GM12878 (cell line): ENCODE measurements at regions of chr2 and their contacts with region 1.

Region 1: GRCh38 chr2:62456721-62457539 is 49.1 kb downstream of the TMEM17 start:
- DNase-seq: no peak
- ATAC-seq: peak; percentile 97
- H3K4me3 ChIP-seq: peak overlapping the region; percentile 64; the same call in 1 of the 2 replicates
- H3K27ac ChIP-seq: no peak overlapping the region
- H3K4me1 ChIP-seq: no peaks in the 10 kb centered on the region
- H3K27me3 ChIP-seq: no peaks in the 10 kb centered on the region
- CTCF ChIP-seq: peak; percentile 87 to 96 (median 88)
- EP300 ChIP-seq: no peak
- POLR2A ChIP-seq: no peak
- RAD21 ChIP-seq: peak; percentile 93

Region 2: GRCh38 chr2:62032096-62032495 is 424.8 kb before region 1 on chr2:
- CTCF ChIA-PET with region 1: no interaction called
- POLR2A ChIA-PET with region 1: no interaction called
- RAD21 ChIA-PET with region 1: no interaction called
- SMC1A ChIA-PET with region 1: no interaction called
- in situ Hi-C with region 1: no loop called
- intact Hi-C with region 1: no loop called
- DNase-seq: no peak
- ATAC-seq: peak; percentile 62
- H3K4me3 ChIP-seq: no peak overlapping the region
- H3K27ac ChIP-seq: no peak overlapping the region
- H3K4me1 ChIP-seq: peaks cover 14% of the 10 kb centered on the region
- H3K27me3 ChIP-seq: no peaks in the 10 kb centered on the region
- CTCF ChIP-seq: no peak
- EP300 ChIP-seq: no peak
- POLR2A ChIP-seq: no peak
- RAD21 ChIP-seq: no peak

Region 3: GRCh38 chr2:62443886-62444285 is 13.0 kb before region 1 on chr2:
- CTCF ChIA-PET with region 1: interaction called, 15 read pairs
- POLR2A ChIA-PET with region 1: no interaction called
- RAD21 ChIA-PET with region 1: interaction called, 3 read pairs
- SMC1A ChIA-PET with region 1: interaction called, 8 read pairs
- in situ Hi-C with region 1: no loop called
- intact Hi-C with region 1: no loop called
- DNase-seq: no peak
- ATAC-seq: peak; percentile 59; the same call in 2 of the 3 replicates
- H3K4me3 ChIP-seq: no peak overlapping the region
- H3K27ac ChIP-seq: no peak overlapping the region
- H3K4me1 ChIP-seq: peaks cover 13% of the 10 kb centered on the region
- H3K27me3 ChIP-seq: no peaks in the 10 kb centered on the region
- CTCF ChIP-seq: 0 out of 6 replicates have a peak, but pooled peaks of 1 of the 3 experiments have one; percentile 10
- EP300 ChIP-seq: no peak
- POLR2A ChIP-seq: no peak
- RAD21 ChIP-seq: peak; percentile 33; the same call in 1 of the 2 replicates

Region 4: GRCh38 chr2:62475172-62476011 is 18.5 kb after region 1 on chr2:
- CTCF ChIA-PET with region 1: interaction called, 25 read pairs
- POLR2A ChIA-PET with region 1: no interaction called
- RAD21 ChIA-PET with region 1: interaction called, 4 read pairs
- SMC1A ChIA-PET with region 1: interaction called, 8 read pairs
- in situ Hi-C with region 1: no loop called
- intact Hi-C with region 1: no loop called
- DNase-seq: no peak
- ATAC-seq: no peak
- H3K4me3 ChIP-seq: no peak overlapping the region
- H3K27ac ChIP-seq: no peak overlapping the region
- H3K4me1 ChIP-seq: no peaks in the 10 kb centered on the region
- H3K27me3 ChIP-seq: no peaks in the 10 kb centered on the region; a peak in 1 of 4 replicates
- CTCF ChIP-seq: no peak
- EP300 ChIP-seq: no peak
- POLR2A ChIP-seq: no peak
- RAD21 ChIP-seq: no peak

Region 5: DNA sequence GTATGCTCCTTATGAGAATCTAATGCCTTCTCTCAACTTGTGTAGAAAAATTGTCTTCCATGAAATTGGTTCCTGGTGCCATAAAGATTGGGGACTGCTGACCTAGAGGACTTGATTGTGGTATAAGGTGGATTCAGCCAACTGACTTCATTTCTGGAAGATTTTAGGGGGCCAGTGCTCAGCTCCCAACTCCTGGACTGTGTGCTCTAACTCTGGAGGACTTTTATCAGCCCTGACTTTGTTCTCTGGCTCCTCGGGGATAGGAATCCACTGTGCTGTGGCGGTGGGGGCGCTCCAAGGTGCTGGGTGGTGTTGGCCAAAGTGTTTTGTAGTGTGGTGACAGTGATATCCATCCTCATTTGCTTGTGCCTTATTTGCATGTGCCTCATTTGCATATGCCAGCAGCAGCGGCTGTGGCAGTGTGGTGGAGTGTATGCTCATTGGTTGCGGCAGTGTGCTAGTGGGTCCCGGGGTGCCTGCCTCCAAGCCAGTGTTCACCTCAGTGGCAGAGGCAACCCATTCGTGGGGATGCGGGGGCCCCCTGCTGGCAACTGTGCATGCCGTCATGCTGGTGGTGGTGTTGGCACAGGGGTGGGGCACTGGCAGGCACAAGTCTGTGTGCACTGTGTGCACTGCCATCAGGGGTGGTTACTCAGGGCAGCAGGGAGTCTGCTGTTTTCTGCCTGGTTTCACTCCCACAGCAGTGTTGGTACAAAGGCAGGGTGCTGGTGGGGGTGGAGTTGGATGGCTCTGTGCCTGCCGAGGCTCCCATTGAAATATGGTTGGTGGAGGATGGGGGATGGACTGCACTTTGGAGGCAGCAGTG is 268.2 kb after region 1 on chr2:
- CTCF ChIA-PET with region 1: interaction called, 12 read pairs
- POLR2A ChIA-PET with region 1: interaction called, 4 read pairs
- RAD21 ChIA-PET with region 1: no interaction called
- SMC1A ChIA-PET with region 1: interaction called, 5 read pairs
- in situ Hi-C with region 1: no loop called
- intact Hi-C with region 1: no loop called
- DNase-seq: no peak
- ATAC-seq: peak; percentile 63
- H3K4me3 ChIP-seq: no peak overlapping the region
- H3K27ac ChIP-seq: no peak overlapping the region
- H3K4me1 ChIP-seq: peaks cover 4% of the 10 kb centered on the region; the same call in 1 of the 2 replicates
- H3K27me3 ChIP-seq: no peaks in the 10 kb centered on the region
- CTCF ChIP-seq: peak in 2 of 3 experiments; percentile 7 to 18; a peak in 1 of 6 replicates
- EP300 ChIP-seq: no peak
- POLR2A ChIP-seq: no peak
- RAD21 ChIP-seq: peak; percentile 31; the same call in 1 of the 2 replicates

Region 6: DNA sequence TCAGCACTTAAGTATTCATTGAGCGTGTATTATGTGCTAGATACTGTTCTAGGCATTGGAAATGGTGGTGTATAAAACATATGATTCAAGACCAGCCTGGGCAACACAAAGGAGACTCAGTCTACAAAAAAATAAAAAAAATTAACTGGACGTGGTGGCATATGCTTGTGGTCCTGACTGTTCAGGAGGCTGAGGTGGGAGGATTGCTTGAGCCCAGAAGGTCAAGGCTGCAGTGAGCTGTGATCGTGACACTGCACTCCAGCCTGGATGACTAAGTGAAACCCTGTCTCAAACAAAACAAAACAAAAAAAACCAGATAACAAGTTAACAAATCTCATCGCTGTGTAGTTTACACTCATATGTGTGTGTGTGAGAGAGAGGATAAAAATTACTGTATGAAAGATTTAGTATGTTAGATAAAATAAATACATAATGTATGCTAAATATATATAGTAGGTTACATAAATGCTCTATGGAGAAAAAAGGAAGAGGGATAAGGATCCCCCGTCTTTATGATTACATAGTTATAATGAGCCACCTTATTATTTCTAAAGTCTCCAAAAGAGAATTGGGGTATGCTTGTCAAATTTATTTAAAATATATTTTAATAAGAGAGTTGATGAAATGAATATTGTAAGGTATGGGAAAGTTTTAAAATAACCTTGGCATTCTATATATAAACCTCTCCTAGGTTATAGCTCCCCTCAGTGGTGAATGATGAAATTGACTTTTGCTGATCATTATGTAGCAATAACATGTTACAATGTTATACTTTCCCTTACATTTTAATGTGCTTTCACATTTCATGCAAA is 317.8 kb after region 1 on chr2:
- CTCF ChIA-PET with region 1: interaction called, 249 read pairs
- POLR2A ChIA-PET with region 1: interaction called, 6 read pairs
- RAD21 ChIA-PET with region 1: interaction called, 183 read pairs
- SMC1A ChIA-PET with region 1: interaction called, 201 read pairs
- in situ Hi-C with region 1: loop called (anchors 5 kb)
- intact Hi-C with region 1: loop called (anchors 1 kb)
- DNase-seq: peak; percentile 17
- ATAC-seq: peak; percentile 78
- H3K4me3 ChIP-seq: no peak overlapping the region
- H3K27ac ChIP-seq: no peak overlapping the region
- H3K4me1 ChIP-seq: no peaks in the 10 kb centered on the region
- H3K27me3 ChIP-seq: no peaks in the 10 kb centered on the region
- CTCF ChIP-seq: peak; percentile 49 to 71 (median 56); a peak in 5 of 6 replicates
- EP300 ChIP-seq: no peak
- POLR2A ChIP-seq: no peak
- RAD21 ChIP-seq: peak; percentile 94

Region 7: GRCh38 chr2:63023444-63023843 is 566.5 kb after region 1 on chr2:
- CTCF ChIA-PET with region 1: interaction called, 18 read pairs
- POLR2A ChIA-PET with region 1: no interaction called
- RAD21 ChIA-PET with region 1: no interaction called
- SMC1A ChIA-PET with region 1: interaction called, 6 read pairs
- in situ Hi-C with region 1: no loop called
- intact Hi-C with region 1: no loop called
- DNase-seq: peak; percentile 12
- ATAC-seq: peak; percentile 88
- H3K4me3 ChIP-seq: no peak overlapping the region
- H3K27ac ChIP-seq: no peak overlapping the region
- H3K4me1 ChIP-seq: no peaks in the 10 kb centered on the region
- H3K27me3 ChIP-seq: no peaks in the 10 kb centered on the region
- CTCF ChIP-seq: peak; percentile 32 to 38 (median 34); a peak in 4 of 6 replicates
- EP300 ChIP-seq: no peak
- POLR2A ChIP-seq: no peak
- RAD21 ChIP-seq: peak; percentile 41; the same call in 1 of the 2 replicates

Region 8: DNA sequence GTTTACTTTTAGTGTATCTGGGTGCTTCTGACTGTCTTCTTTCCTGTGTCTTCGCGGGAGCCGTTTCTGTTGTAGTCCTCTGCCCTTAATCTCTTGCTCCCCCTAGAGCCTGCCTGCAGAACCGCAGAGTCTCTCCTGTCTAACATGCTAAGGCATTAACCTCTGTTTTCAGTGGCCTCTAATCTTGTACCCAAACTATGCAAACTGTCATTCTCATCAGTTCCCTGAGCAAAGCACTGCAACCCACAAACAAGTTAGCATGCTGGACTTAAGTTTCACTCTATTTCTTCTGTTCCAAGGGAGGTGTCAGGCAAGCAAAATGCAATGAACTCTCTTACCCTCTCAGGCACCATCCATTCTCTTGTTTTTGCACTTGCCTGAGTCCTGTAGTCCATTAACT is 732.1 kb after region 1 on chr2:
- CTCF ChIA-PET with region 1: interaction called, 12 read pairs
- POLR2A ChIA-PET with region 1: no interaction called
- RAD21 ChIA-PET with region 1: interaction called, 5 read pairs
- SMC1A ChIA-PET with region 1: interaction called, 10 read pairs
- in situ Hi-C with region 1: no loop called
- intact Hi-C with region 1: loop called (anchors 5 kb)
- DNase-seq: peak; percentile 12
- ATAC-seq: peak; percentile 99
- H3K4me3 ChIP-seq: no peak overlapping the region
- H3K27ac ChIP-seq: no peak overlapping the region
- H3K4me1 ChIP-seq: no peaks in the 10 kb centered on the region; the same call in 1 of the 2 replicates
- H3K27me3 ChIP-seq: no peaks in the 10 kb centered on the region
- CTCF ChIP-seq: peak; percentile 80 to 92 (median 83)
- EP300 ChIP-seq: no peak
- POLR2A ChIP-seq: no peak
- RAD21 ChIP-seq: peak; percentile 63